Posterior cingulate gyrus (tissue), 11 donors: ENCODE measurements at regions of chr12 and their contacts with region 1.

Region 1: GRCh38 chr12:57904848-57905811 is 36.2 kb upstream of the ATP23 start:
- DNase-seq: peak; percentile 66 to 96 (median 82)

Region 2: DNA sequence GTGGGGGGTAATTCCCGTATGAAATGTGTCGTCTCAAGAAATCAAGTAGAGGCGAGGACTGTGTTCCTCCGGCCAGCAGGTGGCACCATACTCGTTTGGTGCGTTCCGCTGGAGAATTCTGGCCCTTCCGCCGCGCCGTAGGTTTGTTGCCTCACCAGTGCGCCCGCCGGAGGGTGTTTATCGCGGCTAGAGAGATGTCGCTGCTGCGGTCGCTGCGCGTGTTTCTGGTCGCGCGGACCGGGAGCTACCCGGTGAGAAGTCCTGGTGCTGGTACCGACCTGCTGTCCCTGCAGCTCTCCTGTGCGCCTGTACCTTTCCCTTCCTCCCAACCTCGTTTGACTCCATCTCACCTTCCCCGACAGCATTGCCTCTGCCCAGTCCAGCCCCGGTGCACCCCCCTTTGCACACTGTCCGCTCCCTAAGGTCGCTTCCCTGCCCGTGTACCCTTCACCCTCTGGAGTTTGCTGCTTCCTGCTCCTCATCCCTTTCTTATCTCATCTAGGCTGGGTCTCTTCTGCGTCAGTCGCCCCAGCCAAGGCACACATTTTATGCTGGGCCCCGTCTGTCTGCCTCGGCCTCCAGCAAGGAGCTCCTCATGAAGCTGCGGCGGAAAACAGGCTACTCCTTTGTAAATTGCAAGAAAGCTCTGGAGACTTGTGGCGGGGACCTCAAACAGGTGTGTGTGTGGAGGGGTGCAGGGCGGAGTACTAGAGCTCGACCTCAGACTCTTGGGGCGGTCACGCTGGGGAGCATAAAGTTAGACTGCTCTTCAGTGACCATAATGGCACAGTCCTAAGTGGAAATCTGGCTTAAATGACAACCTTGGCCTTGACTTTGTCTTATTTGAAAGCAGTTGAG is 122.3 kb before region 1 on chr12 and contains the start of gene TSFM:
- intact Hi-C with region 1: loop called (anchors 5 kb)
- DNase-seq: peak; percentile 95 to 99 (median 98)

Region 3: DNA sequence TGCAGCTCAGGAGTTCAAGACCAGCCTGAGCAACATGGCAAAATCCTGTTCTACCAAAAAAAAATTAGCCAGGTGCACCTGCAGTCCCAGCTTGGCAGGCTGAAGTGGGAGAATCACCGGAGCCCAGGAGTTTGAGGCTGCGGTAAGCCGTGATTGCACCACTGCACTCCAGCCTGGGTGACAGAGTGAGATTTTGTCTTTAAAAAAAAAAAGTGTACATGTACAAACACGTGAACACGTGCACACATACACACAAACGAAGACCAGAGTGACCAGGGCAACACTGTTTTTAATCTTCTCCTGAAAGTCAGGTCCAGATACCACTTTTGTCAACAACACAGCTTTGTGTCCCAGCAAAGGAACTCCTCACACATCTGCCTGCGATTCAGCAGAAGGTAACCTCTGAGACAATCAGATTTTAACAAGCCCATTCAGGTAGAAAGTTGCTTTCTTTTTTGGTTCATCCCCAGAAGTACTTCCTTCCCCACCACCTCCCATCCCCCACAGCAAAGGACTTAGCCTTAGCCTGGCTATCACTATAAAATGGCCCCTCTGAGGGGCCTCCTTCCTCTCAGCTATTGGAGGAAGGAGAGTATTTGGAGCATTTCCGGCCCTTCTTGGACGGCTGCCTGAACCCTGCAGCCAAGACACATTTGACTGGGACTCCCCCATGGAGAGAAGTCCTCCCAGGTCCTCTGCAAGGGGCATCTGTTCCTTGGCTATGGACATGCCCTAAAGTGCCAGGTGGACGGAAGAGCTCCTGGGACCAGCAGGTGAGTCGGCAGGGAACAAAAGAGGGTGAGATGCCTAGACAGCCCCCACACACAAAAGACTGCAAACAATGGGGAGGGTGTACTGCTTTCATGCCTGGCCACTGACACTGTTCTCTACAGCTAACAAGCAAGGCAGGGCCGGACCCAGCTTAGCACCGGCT is 68.4 kb before region 1 on chr12:
- intact Hi-C with region 1: loop called (anchors 1 kb)
- DNase-seq: peak in 4 of 10 donors; percentile 41 to 90 (median 42)

Region 4: GRCh38 chr12:57983146-57983857 is 78.2 kb after region 1 on chr12:
- intact Hi-C with region 1: no loop called
- DNase-seq: peak in 3 of 10 donors; percentile 32 to 51 (median 34)

Region 5: DNA sequence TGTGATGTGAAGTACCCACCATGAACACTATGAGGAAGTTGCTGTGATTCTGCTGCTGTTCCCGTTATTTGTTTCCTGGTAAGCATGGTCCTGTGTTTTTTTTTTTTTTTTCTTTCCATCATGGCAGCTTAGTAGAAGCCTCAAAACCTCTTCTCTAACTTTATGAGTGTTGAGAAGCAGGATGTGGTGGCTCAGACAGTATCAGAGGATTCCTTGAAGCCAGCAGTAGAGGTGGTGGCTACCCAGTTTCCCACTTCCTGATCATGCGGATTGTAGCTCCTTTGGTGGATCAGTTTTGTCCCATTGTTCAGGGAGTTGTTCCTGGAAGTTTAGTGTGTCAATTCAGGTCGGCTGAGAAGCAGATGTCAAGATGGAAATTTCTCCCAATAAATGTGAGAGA is 212.1 kb after region 1 on chr12:
- intact Hi-C with region 1: no loop called
- DNase-seq: no peak

Region 6: DNA sequence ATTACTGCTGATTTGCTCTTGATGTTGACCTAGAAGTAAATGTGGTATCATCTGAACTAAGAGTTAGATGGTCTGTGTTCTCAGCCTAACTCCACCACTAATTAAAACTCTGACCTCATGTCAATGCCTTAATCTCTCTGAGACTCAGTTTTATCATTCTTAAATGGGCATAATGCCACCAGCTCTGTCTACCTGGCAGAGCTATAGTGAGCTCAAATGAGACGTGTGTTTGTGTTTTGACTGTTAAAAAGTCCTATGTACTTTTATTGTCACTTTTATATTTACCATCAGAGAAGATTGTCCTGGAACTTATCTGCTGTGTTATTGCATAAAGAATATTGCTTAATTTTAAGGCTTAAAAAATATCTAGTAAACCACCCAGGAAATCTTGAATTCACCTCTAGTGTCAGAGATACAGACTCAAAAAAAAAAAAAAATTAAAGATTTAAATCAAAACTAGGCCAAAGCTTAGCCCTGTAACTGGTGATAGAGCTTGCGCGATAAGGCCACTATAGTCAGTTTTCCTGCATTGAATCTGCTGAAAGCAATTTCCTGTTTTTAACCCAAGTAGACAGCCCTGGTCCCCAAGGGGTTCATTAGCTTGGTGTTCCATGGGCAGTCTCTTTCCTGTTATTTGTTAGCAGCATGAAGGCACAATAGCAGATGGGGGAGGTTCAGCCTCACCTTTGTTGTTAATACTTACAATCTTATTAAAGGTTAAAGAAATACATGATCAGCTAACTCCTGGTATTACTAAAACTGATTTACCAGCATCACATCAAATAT is 298.0 kb after region 1 on chr12:
- intact Hi-C with region 1: no loop called
- DNase-seq: no peak